Activated CD4-positive, alpha-beta T cell treated with anti-CD3 and anti-CD28 coated beads for 36 hours (primary cell): ENCODE measurements at regions of chr11 and their contacts with region 1.

Region 1: DNA sequence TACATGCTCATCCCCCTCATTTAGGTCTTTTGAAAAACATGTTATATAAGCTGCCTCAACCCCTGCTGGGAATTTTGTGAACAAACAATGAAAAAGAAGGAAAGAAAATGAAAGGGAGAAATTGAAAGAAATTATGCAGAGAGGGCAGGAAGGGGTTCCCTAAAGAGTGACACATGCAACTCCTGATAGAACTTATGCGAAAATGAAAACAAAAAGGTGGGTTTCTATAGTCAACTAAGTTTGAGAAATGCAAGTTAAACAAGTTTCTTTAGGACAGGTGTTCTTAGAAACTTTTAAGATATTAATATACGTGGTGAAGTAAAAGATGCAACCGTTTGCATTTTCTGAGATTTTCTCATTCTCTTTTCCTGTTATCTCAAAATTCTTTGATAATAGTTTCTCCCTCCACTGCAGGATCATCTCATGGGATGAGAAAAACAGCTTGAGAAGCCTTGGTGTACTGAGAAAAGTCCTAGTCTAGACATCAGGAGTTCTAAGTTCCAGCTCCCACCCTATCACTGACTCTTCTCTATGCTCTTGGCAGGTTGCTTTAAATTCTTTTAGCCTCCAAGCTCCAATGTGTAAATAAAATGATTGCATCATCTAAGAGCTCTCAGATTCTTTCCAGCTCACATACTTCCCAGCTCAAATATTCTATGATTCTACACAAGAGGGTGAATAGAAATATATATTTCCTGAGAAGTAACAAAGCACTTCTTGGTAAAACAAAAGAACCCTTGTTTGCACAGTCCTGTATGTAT is 109.2 kb downstream of the FAM76B start:
- DNase-seq: no peak
- ATAC-seq: peak; percentile 28
- H3K4me3 Mint-ChIP-seq: no peak overlapping the region
- H3K27ac Mint-ChIP-seq: peak overlapping the region; percentile 35
- H3K4me1 Mint-ChIP-seq: peaks cover 81% of the 10 kb centered on the region
- H3K27me3 Mint-ChIP-seq: no peaks in the 10 kb centered on the region

Region 2: DNA sequence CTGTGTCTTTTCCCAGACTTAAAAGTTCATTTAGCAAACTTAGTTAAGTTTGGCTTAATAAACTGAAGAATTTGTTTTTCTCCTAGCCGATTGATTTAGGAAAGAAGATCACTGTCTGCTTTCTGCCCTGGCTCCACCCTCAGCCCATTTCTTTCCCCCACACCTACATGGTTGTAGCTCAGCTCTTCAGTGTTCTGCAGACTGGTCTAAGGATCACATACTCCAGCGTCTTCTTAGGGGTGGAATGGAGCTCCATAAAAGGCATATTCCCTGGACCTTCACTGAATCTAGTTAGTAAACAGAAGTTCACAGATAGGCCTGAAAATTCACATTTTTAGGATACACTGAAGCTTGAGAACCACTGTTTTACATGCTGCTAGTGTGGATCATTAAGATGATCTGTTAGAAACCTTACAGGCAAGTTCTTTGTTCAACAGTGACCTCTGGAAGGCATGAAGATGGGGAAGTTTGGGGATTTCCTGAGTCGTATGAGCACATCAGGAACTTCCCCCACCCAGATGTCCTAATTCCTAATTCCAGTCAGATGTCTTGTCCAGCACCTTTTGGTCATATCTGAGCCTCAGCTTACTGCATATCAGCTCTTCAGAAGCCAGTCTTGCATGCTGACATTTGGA is 1096.4 kb before region 1 on chr11:
- CTCF ChIA-PET with region 1: no interaction called
- POLR2A ChIA-PET with region 1: no interaction called
- intact Hi-C with region 1: no loop called
- DNase-seq: no peak
- ATAC-seq: no peak
- H3K4me3 Mint-ChIP-seq: no peak overlapping the region
- H3K27ac Mint-ChIP-seq: no peak overlapping the region
- H3K4me1 Mint-ChIP-seq: peaks cover 4% of the 10 kb centered on the region
- H3K27me3 Mint-ChIP-seq: no peaks in the 10 kb centered on the region

Region 3: GRCh38 chr11:95715777-95716241 is 35.5 kb after region 1 on chr11:
- CTCF ChIA-PET with region 1: no interaction called
- POLR2A ChIA-PET with region 1: no interaction called
- intact Hi-C with region 1: loop called in 1 of 2 experiments (anchors 5 kb)
- DNase-seq: peak; percentile 71
- ATAC-seq: peak; percentile 76
- H3K4me3 Mint-ChIP-seq: no peak overlapping the region
- H3K27ac Mint-ChIP-seq: peak overlapping the region; percentile 69
- H3K4me1 Mint-ChIP-seq: peaks cover 50% of the 10 kb centered on the region
- H3K27me3 Mint-ChIP-seq: no peaks in the 10 kb centered on the region

Region 4: GRCh38 chr11:96075532-96075959 is 395.2 kb after region 1 on chr11:
- CTCF ChIA-PET with region 1: no interaction called
- POLR2A ChIA-PET with region 1: no interaction called
- intact Hi-C with region 1: loop called in 1 of 2 experiments (anchors 10 kb)
- DNase-seq: peak; percentile 48
- ATAC-seq: peak; percentile 86
- H3K4me3 Mint-ChIP-seq: peak overlapping the region; percentile 20
- H3K27ac Mint-ChIP-seq: peak overlapping the region; percentile 90
- H3K4me1 Mint-ChIP-seq: peaks cover 89% of the 10 kb centered on the region
- H3K27me3 Mint-ChIP-seq: no peaks in the 10 kb centered on the region